CD8-positive, alpha-beta T cell (primary cell): ENCODE measurements at regions of chr9 and their contacts with region 1.

Region 1: GRCh38 chr9:34701769-34702736 is 7.9 kb downstream of the CCL21 start:
- DNase-seq: peak; percentile 53 to 85 (median 81)
- ATAC-seq: peak; percentile 81
- H3K4me3 ChIP-seq: peak overlapping the region; percentile 46 to 53
- H3K4me3 Mint-ChIP-seq: peak overlapping the region; percentile 77
- H3K27ac ChIP-seq: no peak overlapping the region
- H3K27ac Mint-ChIP-seq: no peak overlapping the region
- H3K4me1 ChIP-seq: peaks cover 8% of the 10 kb centered on the region
- H3K4me1 Mint-ChIP-seq: peaks cover 14% of the 10 kb centered on the region
- H3K27me3 ChIP-seq: no peaks in the 10 kb centered on the region
- H3K27me3 Mint-ChIP-seq: peaks cover 11% of the 10 kb centered on the region
- CTCF ChIP-seq: peak; percentile 98

Region 2: GRCh38 chr9:34522971-34523797 is 178.9 kb before region 1 on chr9 and contains the start of gene ENHO:
- CTCF ChIA-PET with region 1: no interaction called
- POLR2A ChIA-PET with region 1: no interaction called
- intact Hi-C with region 1: loop called in 1 of 2 experiments (anchors 5 kb)
- DNase-seq: peak; percentile 79 to 96 (median 87)
- ATAC-seq: peak; percentile 97
- H3K4me3 ChIP-seq: peak within 1 kb of the TSS; percentile 48 to 70
- H3K4me3 Mint-ChIP-seq: peak within 1 kb of the TSS; percentile 83
- H3K27ac ChIP-seq: peak within 1 kb of the TSS in 1 of 2 experiments; percentile 33
- H3K27ac Mint-ChIP-seq: no peak within 1 kb of the TSS
- H3K4me1 ChIP-seq: peaks cover 9% of the 10 kb centered on the region
- H3K4me1 Mint-ChIP-seq: peaks cover 4% of the 10 kb centered on the region
- H3K27me3 ChIP-seq: no peaks in the 10 kb centered on the region
- H3K27me3 Mint-ChIP-seq: peaks cover 2% of the 10 kb centered on the region
- CTCF ChIP-seq: no peak
- total RNA-seq, gene ENHO: not detected

Region 3: GRCh38 chr9:34646211-34647083 is 55.6 kb before region 1 on chr9 and contains the start of gene GALT:
- CTCF ChIA-PET with region 1: interaction called, 10 read pairs
- POLR2A ChIA-PET with region 1: interaction called, 3 read pairs
- intact Hi-C with region 1: loop called (anchors 1 to 5 kb)
- DNase-seq: peak; percentile 90 to 98 (median 97)
- ATAC-seq: peak; percentile 90
- H3K4me3 ChIP-seq: peak within 1 kb of the TSS; percentile 89 to 99
- H3K4me3 Mint-ChIP-seq: peak within 1 kb of the TSS; percentile 95
- H3K27ac ChIP-seq: peak within 1 kb of the TSS; percentile 69 to 80
- H3K27ac Mint-ChIP-seq: peak within 1 kb of the TSS; percentile 89
- H3K4me1 ChIP-seq: peaks cover 27% of the 10 kb centered on the region
- H3K4me1 Mint-ChIP-seq: peaks cover 31% of the 10 kb centered on the region
- H3K27me3 ChIP-seq: no peaks in the 10 kb centered on the region
- H3K27me3 Mint-ChIP-seq: no peaks in the 10 kb centered on the region
- CTCF ChIP-seq: peak; percentile 58
- total RNA-seq, gene GALT: 64.7 to 68.4 TPM

Region 4: DNA sequence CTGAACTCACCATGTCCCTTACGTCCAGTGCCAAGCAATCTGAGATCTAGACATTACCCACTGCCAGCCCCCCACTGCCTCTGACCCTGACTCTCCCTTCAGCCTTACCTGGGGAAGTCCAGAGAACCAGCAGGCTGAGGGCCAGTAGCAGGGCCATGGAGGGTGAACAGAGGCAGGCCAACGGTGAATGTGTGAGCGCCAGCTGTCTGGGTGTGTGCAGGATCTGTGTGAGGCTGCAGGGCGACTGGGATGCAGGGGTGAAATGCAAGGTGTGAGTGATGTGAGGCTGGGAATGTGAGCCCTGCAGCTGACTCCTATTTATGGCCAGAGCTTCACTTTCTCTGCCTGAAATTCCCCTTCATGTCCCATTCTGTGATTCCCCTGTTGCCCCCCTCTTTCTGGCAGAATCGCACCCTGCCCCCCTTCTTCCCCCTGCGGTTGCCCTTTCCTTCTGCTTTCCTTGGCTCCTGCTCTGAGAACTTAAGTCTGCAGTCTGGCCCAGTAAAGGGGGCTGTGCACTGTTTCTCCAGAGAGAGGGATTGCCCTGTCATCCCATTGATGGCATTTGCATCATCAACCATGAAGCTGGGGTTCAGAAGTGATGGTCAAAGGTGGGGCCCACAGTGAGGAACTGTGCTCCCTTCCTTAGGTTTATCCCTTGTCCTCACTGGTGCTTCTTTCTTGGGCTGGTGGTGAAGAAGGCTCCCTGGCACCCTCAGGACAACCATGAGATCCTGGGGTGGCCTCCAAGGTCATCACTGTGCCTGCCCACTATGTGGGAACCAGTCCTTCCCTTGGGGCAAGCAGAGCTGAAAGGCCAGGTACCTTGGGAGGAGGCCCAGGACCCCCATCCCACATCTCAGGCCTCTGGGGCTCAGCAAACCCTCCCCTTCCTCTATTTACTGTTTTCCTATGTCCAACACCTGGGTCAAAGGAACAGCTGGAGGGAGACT is 10.8 kb before region 1 on chr9 and contains the start of gene CCL19:
- CTCF ChIA-PET with region 1: interaction called, 21 read pairs
- POLR2A ChIA-PET with region 1: no interaction called
- intact Hi-C with region 1: no loop called
- DNase-seq: no peak
- ATAC-seq: no peak
- H3K4me3 ChIP-seq: no peak within 1 kb of the TSS
- H3K4me3 Mint-ChIP-seq: no peak within 1 kb of the TSS
- H3K27ac ChIP-seq: no peak within 1 kb of the TSS
- H3K27ac Mint-ChIP-seq: no peak within 1 kb of the TSS
- H3K4me1 ChIP-seq: no peaks in the 10 kb centered on the region
- H3K4me1 Mint-ChIP-seq: no peaks in the 10 kb centered on the region
- H3K27me3 ChIP-seq: no peaks in the 10 kb centered on the region
- H3K27me3 Mint-ChIP-seq: peaks cover 10% of the 10 kb centered on the region
- CTCF ChIP-seq: no peak
- total RNA-seq, gene CCL19: not detected

Region 5: DNA sequence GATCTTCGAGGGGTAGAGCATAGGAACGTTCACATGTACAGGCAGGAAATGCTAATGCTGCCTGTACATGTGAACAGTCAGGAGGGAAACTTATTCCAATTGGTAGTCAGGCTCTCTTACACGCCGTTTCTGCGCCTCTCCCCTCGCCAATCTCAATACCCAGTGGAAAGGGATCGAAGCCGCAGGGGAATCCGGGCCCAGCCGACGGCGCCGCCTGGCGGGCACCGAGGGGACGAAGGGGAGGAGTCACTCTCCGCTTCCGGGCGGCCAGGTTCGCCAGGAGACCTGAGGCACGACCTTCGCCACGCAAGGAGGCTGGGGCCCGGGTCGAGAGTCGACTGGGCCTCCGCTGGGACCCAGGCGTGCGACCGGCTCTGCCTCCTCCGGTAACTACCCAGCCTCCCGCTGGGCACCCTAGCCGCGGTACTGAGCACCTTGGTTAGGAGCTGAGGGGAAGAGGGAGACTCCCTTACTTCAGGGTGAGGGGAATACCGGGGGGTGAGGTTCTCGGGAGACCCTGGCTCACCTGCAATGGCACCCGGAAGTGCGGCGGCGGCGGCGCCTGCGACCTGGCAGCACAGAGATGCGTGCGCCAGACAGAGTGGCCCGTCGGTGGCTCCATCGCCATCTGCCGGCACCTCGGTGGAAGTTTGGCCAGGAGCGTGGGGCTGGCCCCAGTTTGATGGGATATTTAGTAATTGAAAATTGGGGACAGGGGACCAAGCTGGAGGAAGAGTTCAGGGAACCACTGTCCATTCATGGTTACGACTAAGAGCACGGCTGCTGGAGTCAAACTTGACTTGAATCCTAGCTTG is 394.2 kb after region 1 on chr9 and contains the start of gene PIGO:
- CTCF ChIA-PET with region 1: no interaction called
- POLR2A ChIA-PET with region 1: no interaction called
- intact Hi-C with region 1: loop called in 1 of 2 experiments (anchors 1 kb)
- DNase-seq: peak; percentile 78 to 94 (median 89)
- ATAC-seq: peak; percentile 90
- H3K4me3 ChIP-seq: peak within 1 kb of the TSS; percentile 95 to 99
- H3K4me3 Mint-ChIP-seq: peak within 1 kb of the TSS; percentile 88
- H3K27ac ChIP-seq: peak within 1 kb of the TSS; percentile 95 to 100
- H3K27ac Mint-ChIP-seq: peak within 1 kb of the TSS; percentile 95
- H3K4me1 ChIP-seq: peaks cover 24% of the 10 kb centered on the region
- H3K4me1 Mint-ChIP-seq: peaks cover 32% of the 10 kb centered on the region
- H3K27me3 ChIP-seq: no peaks in the 10 kb centered on the region
- H3K27me3 Mint-ChIP-seq: no peaks in the 10 kb centered on the region
- CTCF ChIP-seq: peak; percentile 75
- total RNA-seq, gene PIGO: 15.1 to 16.4 TPM